Activated CD4-positive, alpha-beta T cell treated with anti-CD3 and anti-CD28 coated beads, Interleukin-2, amount 10 ng/mL, durations not matched to agents 24 days and 14 days (primary cell): ENCODE measurements at regions of chr13 and their contacts with region 1.

Region 1: DNA sequence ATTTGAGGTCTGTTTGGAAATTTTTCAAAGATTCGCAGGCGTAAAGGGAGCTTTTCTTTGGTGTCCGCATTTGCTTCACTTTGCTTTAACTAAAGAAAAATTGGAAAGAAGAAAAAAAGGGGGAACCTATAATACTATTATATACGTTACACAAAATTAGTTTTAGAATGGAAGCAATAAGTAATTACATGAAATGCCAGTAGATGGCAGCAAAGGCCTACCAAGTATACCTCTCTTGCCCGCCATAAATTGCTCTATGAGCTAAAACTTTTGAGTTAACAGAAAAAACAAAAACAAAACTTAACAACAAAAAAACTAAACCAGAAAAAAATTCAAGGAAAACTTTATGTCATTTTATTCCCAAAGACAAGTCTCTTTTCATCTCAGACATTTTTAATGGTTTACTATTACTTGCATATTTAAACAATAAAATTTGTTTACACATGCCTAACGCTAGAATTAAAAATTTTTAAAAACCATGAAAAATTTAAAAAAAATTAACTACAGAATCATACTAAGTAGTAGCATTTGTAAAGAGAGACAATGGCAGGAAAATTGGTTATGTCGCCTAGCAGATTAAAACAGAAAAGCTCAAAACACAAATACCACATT is 271.4 kb downstream of the NALCN start:
- DNase-seq: peak; percentile 74
- H3K4me3 Mint-ChIP-seq: no peak overlapping the region
- H3K27ac Mint-ChIP-seq: no peak overlapping the region
- H3K4me1 Mint-ChIP-seq: no peaks in the 10 kb centered on the region
- H3K27me3 Mint-ChIP-seq: peaks cover 3% of the 10 kb centered on the region

Region 2: DNA sequence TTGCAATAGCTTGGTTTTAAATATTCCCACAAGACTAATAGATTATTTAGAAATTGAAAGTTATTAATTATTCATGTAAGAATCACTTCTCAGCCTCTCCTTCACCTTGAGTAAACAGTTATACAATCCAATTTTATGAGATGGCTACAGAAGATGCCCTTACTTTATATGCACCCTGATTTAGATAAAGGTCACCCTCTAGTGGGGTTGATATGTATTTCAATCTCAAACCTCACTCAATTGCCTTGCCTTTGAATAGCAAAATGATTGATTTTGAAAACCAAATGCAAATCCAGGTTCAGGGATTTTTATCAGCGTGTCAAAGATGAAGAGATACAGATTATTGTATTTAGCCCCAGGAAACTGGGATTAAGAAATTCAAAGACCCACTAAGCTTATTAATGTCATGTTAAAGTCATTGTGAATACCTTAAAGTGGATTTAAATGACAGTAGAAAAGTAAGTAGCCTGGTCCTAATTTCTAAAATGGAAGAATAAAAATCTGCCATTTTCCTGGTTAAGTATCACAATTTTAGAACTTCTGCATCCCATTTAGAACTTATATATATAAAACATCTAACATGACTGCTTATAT is 612.6 kb after region 1 on chr13:
- intact Hi-C with region 1: loop called (anchors 2 kb)
- DNase-seq: no peak
- H3K4me3 Mint-ChIP-seq: no peak overlapping the region
- H3K27ac Mint-ChIP-seq: no peak overlapping the region
- H3K4me1 Mint-ChIP-seq: no peaks in the 10 kb centered on the region
- H3K27me3 Mint-ChIP-seq: peaks cover 3% of the 10 kb centered on the region

Region 3: GRCh38 chr13:102460801-102461200 is 1315.9 kb after region 1 on chr13:
- intact Hi-C with region 1: loop called (anchors 1 kb)
- DNase-seq: no peak
- H3K4me3 Mint-ChIP-seq: no peak overlapping the region
- H3K27ac Mint-ChIP-seq: no peak overlapping the region
- H3K4me1 Mint-ChIP-seq: peaks cover 5% of the 10 kb centered on the region
- H3K27me3 Mint-ChIP-seq: peaks cover 8% of the 10 kb centered on the region